OCI-LY7 (cell line): ENCODE measurements at regions of chr7 and their contacts with region 1.

Region 1: GRCh38 chr7:18520450-18521235 is 25.1 kb downstream of the HDAC9 start:
- DNase-seq: peak; percentile 87
- H3K4me3 ChIP-seq: peak overlapping the region; percentile 65
- H3K27ac ChIP-seq: peak overlapping the region; percentile 99
- H3K4me1 ChIP-seq: peaks cover 99% of the 10 kb centered on the region
- CTCF ChIP-seq: no peak

Region 2: DNA sequence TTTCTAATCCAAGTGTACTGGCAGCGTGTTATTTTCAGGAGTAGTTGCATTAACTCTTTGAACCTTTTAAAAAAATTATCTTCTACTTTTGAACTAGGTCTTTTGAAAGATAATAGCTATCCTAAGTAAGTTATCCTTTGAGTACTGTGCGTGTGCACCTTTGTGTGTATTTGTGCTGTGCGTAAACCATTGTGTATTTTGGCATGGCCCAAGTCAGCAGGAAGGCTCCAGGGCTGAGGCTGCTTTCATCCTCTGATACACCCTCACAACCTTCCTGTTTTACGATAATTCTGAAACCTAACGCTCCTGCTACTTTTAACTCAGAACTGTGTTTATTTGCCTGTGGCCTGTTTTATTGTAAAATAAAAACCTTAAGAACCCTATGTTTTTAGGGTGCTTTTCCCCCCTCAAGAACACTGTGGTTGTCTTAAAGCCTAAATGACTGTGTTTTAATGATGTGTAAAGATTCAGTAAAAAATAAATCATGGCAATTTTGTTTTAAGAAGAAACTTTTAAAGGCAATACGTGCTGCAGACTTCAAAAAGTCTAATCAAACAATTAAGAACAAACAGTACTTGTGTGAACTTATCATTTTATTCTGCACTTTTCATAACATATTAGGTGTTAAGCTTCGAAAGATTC is 32.4 kb after region 1 on chr7:
- CTCF ChIA-PET with region 1: interaction called, 3 read pairs
- POLR2A ChIA-PET with region 1: interaction called, 15 read pairs
- intact Hi-C with region 1: no loop called
- DNase-seq: peak; percentile 54
- H3K4me3 ChIP-seq: peak overlapping the region; percentile 41
- H3K27ac ChIP-seq: peak overlapping the region; percentile 36
- H3K4me1 ChIP-seq: peaks cover 43% of the 10 kb centered on the region
- CTCF ChIP-seq: no peak

Region 3: DNA sequence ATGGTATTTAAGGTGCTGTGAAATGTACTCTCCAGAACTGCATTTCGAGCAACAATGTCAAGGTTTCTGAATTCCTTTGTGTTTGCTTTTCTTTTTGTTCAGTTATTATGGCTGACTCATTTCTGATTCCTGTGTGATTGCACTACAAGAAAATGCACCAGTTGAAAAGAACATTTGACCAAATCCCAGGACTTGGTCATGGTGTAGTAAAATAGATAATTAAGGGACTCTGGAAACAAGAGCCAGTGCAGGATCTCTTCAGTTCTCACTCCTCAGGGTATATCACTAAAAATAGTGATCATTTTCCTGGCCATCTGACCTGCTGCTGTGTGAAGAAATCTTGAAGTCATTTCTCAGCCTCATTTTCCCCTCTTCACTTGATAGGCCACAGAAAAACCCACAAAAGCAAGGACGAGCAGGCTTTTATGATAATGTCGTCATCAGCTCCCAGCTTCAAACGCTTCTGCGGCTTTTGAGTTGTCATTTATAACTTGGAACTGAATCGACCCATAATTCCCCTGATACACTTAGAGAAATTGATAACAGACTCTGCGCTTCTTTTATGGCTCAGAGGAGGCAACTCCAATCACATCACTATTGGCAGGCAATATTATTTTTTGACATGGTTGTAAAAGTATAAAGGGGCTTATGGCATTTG is 249.6 kb after region 1 on chr7:
- CTCF ChIA-PET with region 1: no interaction called
- POLR2A ChIA-PET with region 1: no interaction called
- intact Hi-C with region 1: no loop called
- DNase-seq: no peak
- H3K4me3 ChIP-seq: no peak overlapping the region
- H3K27ac ChIP-seq: no peak overlapping the region
- H3K4me1 ChIP-seq: no peaks in the 10 kb centered on the region
- CTCF ChIP-seq: no peak

Region 4: DNA sequence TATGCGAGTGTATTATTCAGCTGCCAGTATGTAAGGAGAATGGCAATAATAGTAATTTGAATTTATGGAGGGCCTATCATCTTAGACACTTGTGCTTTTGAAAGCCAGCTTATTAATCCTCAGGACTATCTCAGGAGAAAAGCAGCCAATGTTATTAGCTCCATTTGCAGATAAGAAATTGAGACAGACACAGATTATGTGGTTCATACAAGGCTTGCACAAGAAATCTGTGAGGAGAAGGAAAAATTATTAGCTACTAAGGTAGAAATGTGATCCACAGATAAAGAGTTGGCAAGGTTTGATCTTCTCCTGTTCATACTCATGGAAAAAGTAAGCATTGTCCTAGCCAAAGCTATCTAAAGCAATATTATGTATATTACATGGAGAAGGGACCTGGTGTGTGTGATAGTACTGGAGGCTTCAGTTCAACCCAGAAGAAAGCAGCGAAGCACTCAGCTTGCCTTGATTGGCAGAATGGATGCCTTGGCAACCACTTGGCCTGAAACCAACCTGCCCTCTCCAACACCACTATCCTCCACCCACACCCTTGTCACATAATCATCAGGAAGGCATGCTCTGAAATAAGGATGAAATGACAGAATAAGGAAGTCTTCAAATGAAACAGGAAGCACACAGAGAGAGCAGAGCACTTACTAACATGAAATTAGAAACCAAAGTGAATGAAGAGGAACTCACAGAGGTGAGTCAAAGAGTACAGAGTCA is 1678.5 kb after region 1 on chr7:
- CTCF ChIA-PET with region 1: no interaction called
- POLR2A ChIA-PET with region 1: no interaction called
- intact Hi-C with region 1: loop called (anchors 5 kb)
- DNase-seq: peak; percentile 68
- H3K4me3 ChIP-seq: peak overlapping the region; percentile 36
- H3K27ac ChIP-seq: peak overlapping the region; percentile 58
- H3K4me1 ChIP-seq: peaks cover 45% of the 10 kb centered on the region
- CTCF ChIP-seq: no peak